Vagina (tissue), 2 donors: ENCODE measurements at regions of chr11 and their contacts with region 1.

Region 1: DNA sequence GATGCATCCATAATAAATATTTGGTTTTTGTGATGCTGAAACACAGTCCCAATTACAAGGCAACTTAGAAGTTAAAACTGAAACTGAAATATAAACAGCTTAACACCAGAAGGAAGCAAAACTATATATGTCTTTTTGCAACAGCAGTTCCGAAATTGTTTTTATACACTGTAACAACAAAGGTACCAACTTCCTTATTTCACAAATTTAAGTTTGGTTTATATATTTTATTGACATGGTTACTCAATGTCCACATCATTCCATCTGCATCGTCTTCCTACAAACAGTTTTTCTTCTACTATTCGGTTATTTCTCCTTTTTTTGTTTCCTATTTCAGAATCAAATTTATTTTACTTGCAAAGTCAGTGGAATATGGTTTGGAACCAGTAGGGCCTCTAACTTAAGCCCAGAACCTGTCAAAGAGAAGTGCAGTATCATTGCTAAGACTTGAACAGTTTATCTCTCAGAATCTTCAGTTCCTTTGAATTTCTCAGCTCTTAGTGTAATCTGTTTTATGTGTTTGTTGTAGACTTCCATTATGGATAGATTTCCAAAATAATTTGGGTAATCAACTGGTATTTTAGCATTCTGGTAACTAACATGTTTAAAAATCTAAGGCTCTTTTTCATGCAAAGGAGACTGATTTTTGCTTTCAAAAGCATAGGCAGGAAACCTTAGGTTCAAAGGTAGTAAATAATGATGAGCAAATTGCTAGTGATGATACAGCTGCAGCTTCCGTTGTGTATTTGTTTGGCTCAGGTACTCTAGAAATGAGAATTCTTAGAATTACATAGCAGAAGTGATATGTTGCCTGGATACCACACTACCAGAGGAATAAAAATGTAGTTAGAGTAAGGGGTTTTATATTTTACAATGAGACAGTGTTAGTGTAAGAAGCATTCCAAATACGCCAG is 8.2 kb upstream of the HSPA8 start:
- DNase-seq: no peak
- H3K4me3 ChIP-seq: peak overlapping the region; percentile 8 to 21
- H3K27ac ChIP-seq: peak overlapping the region; percentile 59
- H3K4me1 ChIP-seq: peaks cover 11% of the 10 kb centered on the region
- H3K27me3 ChIP-seq: no peaks in the 10 kb centered on the region
- CTCF ChIP-seq: no peak
- POLR2A ChIP-seq: no peak

Region 2: GRCh38 chr11:121194731-121195596 is 1875.2 kb before region 1 on chr11:
- intact Hi-C with region 1: loop called (anchors 5 kb)
- DNase-seq: no peak
- H3K4me3 ChIP-seq: no peak overlapping the region
- H3K27ac ChIP-seq: no peak overlapping the region
- H3K4me1 ChIP-seq: no peaks in the 10 kb centered on the region
- H3K27me3 ChIP-seq: no peaks in the 10 kb centered on the region
- CTCF ChIP-seq: peak; percentile 76 to 83 (median 78)
- POLR2A ChIP-seq: no peak